Activated naive CD4-positive, alpha-beta T cell treated with anti-CD3 and anti-CD28 coated beads, Interleukin-2, amount 10 ng/mL, durations not matched to agents 7 days and 5 days (primary cell): ENCODE measurements at regions of chr1 and their contacts with region 1.

Region 1: GRCh38 chr1:154669464-154670282 is 61.7 kb upstream of the ADAR start:
- DNase-seq: peak; percentile 87
- H3K4me3 Mint-ChIP-seq: no peak overlapping the region
- H3K27ac Mint-ChIP-seq: no peak overlapping the region
- H3K4me1 Mint-ChIP-seq: peaks cover 15% of the 10 kb centered on the region
- H3K27me3 Mint-ChIP-seq: no peaks in the 10 kb centered on the region

Region 2: DNA sequence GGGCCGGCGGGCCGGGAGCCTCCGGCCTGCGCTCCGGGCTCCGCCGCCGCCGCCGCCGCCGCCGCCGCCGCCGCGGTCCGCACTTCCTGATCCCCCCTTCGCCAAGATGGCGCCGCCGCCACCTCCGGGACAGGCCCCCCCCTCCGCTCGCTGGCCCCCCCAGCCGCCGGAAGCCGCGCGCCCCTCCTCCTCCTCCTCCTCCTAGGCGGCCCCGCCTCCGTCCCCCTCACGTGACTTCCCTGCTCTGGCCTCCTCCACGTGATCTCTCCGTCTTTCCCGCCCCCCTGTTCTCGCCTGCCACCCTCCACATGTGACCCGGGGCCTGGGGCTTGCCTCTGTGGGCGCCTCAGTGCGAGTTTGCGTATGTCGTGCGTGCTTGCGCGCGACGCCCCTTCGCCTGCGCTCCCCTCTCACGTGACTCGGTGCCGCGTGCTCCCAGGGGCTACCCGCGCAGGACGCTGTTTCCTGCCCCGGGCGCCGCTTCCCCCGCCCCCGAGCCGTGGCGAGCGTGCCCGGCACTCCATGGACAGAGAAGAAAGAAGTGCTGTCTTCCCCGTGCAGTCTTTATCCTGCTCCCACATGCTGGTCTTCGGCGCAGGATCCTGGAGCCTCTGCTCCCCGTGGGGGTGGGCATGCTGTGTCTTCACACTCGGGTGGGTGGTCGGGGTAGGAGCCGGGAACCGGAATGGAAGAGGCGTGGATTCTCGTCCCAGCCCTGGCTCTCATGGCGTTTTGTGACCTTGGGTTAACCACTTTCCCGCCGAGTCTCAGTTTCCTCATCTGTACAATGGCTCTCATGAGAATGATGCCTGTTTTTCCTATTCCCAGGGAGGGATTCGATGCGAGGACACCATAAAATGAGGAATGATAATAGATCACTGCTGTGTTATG is 110.9 kb before region 1 on chr1 and contains the start of gene UBE2Q1:
- CTCF ChIA-PET with region 1: interaction called, 19 read pairs
- DNase-seq: peak; percentile 100
- H3K4me3 Mint-ChIP-seq: peak within 1 kb of the TSS; percentile 91
- H3K27ac Mint-ChIP-seq: peak within 1 kb of the TSS; percentile 87
- H3K4me1 Mint-ChIP-seq: peaks cover 36% of the 10 kb centered on the region
- H3K27me3 Mint-ChIP-seq: peaks cover 8% of the 10 kb centered on the region

Region 3: GRCh38 chr1:154747740-154748404 is 78.2 kb after region 1 on chr1:
- CTCF ChIA-PET with region 1: interaction called, 40 read pairs
- DNase-seq: peak; percentile 78
- H3K4me3 Mint-ChIP-seq: peak overlapping the region; percentile 79
- H3K27ac Mint-ChIP-seq: peak overlapping the region; percentile 96
- H3K4me1 Mint-ChIP-seq: peaks cover 81% of the 10 kb centered on the region
- H3K27me3 Mint-ChIP-seq: peaks cover 55% of the 10 kb centered on the region

Region 4: GRCh38 chr1:154819628-154820590 is 150.2 kb after region 1 on chr1:
- CTCF ChIA-PET with region 1: interaction called, 11 read pairs
- DNase-seq: peak; percentile 47
- H3K4me3 Mint-ChIP-seq: no peak overlapping the region
- H3K27ac Mint-ChIP-seq: no peak overlapping the region
- H3K4me1 Mint-ChIP-seq: no peaks in the 10 kb centered on the region
- H3K27me3 Mint-ChIP-seq: peaks cover 10% of the 10 kb centered on the region

Region 5: DNA sequence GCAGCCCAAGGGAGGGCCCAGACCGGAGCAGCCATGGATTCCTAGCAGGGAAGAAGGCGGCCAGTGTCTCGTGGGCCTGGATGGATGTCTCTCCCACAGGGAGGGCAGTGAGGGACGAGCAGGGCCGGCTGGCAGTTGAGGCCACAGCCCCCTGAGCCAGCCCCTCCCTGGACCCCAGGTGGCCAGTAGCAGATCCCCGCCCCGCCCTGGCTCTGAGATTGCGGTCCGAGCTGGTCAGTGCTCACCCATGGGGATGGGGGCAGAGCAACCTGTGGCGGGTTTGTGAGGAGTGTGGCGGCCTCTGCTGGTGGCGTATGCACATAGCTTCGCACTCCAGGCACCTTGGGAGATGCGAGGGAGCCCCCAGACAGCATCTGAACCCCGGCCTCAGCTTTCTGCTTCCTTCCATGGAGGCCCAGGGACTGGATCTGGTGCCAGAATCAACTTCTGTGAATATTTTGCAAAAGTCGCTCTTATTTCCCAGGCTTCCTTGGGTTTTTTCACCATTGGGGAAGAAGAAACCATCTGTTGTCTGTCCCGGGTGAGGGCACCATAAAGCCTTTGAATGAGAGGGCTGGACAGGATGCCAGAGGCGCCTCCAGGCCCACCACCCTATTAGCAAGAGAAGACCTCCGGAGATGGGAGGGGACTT is 208.8 kb after region 1 on chr1:
- CTCF ChIA-PET with region 1: interaction called, 50 read pairs
- DNase-seq: peak; percentile 79
- H3K4me3 Mint-ChIP-seq: no peak overlapping the region
- H3K27ac Mint-ChIP-seq: no peak overlapping the region
- H3K4me1 Mint-ChIP-seq: no peaks in the 10 kb centered on the region
- H3K27me3 Mint-ChIP-seq: peaks cover 18% of the 10 kb centered on the region

Region 6: DNA sequence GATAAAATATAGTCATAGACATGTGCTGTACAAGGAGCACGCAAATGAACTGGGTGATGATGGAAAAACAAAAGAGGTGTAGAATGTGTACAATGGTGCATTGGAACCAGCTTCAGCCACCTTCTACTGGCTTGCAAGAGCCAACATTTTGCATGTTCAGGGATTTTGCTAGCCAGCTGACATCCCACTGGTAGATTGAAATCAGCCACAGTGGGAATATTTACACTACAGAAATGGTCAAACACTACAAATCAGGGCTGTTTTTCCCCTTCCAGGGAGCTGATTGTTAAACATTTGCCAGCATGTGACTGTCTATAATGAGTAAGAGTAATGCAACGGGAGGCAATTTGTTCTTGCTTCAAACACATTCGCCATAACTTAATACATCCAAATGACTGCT is 243.6 kb after region 1 on chr1:
- CTCF ChIA-PET with region 1: no interaction called
- DNase-seq: no peak
- H3K4me3 Mint-ChIP-seq: no peak overlapping the region
- H3K27ac Mint-ChIP-seq: no peak overlapping the region
- H3K4me1 Mint-ChIP-seq: no peaks in the 10 kb centered on the region
- H3K27me3 Mint-ChIP-seq: peaks cover 5% of the 10 kb centered on the region